Sciatic nerve (tissue), 2 donors: ENCODE measurements at regions of chr3 and their contacts with region 1.

Region 1: GRCh38 chr3:157201648-157202278 is 41.8 kb upstream of the CCNL1 start:
- DNase-seq: no peak
- ATAC-seq: peak; percentile 72

Region 2: DNA sequence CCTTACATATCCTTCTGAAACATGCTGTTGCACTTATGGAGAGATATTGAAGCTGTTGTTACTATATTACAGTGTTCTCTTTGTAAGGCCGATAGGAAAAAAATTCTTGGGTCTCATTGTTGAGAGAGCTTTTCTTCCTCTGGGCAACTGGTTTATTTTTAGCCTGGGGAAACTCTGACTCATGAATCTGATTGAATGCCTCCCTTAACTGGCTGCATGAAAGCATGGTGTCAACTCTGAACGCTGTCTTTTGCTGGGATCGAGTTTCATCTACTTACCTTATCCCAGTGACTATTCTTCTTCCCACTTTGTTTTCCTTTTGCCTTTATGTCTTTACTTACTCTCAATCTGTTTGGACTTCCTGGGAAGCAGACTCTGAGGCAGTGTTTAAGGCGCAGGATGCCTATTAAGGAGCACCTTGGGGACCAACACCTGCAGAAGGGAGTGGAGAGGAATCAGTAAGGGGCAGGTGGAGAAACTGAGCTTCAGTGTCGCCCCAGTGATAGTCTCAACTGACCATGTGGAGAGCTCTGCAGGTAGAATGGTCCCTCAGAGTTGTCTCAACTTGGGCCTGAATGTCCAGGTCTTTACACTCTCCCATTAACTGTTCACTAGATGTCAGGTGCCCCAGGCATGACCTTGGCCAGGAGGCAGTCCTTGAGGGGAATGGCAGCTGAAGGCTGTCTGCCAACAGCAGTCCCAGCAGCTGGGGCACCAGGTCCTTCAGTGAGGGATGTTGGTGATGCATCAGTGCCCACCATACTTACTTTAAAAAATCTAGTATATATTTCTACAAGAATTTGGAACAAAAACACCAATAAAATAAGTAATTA is 47.0 kb after region 1 on chr3:
- intact Hi-C with region 1: no loop called
- DNase-seq: no peak
- ATAC-seq: peak; percentile 82

Region 3: DNA sequence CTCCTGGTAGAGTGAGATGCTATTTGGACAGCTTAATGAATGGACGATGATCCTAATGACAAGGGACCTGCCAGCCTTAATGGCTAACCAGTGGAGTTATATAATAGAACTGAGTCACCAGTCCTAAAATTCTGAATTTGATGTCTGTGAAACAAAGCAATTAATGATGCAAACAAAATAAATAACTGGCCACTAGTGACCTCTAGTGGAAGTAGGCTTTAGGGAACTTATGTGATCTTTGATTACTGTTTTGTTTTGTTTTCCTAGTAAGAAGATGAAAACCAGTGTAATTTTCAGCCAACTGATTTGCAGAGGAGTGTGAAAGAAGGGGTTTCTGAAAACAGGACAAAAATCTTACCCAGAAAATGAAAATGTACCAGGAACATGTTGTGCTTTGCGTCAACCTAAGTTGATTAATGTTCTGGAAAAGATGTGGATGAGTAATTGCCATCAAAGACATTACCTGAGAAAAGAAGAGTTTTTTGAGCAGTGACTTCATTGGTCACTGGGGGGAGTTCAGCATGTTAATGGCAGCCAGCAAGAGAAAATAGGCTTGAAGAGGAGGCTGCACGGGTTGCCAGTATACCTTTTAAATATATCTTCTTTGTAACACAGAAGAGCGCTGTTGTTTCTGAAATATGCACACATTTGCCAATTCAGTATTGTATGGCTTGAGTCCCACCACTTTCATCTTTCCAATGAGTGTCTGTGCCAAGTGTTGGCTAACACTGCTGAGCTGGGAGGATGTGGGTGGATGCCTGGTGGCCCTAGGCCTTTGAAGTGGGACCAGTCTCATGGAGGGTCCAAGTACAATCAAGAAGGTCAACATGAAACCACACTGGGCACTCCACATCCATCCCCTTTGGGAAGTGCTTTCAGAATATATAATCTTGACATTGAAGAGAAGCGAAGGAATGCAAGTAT is 292.1 kb after region 1 on chr3:
- intact Hi-C with region 1: loop called (anchors 5 kb)
- DNase-seq: no peak
- ATAC-seq: peak; percentile 60